ENCODE measurements at regions of chr7 and their contacts with region 1.

Region 1: DNA sequence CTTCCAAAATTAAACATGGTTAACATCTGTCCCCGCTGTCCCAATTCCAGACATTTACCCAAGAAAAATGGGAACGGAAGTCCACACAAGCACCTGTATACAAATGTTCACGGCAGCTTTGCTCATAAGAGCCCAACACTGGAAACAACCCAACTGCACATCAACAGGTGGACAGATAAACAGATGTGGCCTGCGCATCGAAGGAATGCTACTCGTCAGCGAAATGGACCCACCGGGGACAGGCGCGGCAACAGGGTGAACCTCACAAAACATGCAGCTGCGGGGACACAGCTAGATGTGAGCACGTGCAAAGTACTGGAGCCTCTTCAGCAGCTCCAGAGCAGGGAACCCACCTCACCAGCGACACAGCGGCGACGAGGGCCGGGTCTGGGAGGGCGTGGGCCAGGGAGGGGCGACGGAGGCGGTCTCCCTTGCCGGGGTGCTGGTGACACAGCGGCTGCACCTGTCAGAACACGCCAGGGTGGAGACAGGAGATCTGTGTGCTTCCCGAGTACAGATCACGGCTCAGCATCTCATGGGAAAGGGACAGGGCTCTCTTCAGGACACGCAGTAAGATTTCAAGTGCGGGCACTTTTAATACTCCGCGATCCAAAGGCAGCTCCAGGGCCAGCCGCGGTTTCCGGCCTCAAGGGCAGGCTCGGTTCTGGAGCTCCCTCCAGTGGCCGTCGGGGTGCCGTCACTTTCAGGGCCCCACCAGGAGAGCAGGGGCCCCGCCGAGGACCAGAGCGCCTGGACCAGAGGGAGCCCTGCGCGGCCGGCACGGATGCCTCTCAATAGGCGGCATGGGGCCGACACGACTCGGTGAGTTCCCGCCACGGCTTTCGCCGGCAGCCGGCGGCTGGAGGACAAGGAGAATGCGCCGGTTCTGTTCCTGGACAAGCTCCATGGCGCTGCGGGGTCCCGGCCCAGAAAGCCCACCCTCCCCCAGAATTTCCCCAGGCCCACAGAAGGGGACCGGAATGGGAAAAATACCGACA is 21.2 kb downstream of the GPR146 start:
- DNase-seq: peak; percentile 89
- ATAC-seq: peak; percentile 98
- H3K4me3 Mint-ChIP-seq: no peak overlapping the region
- H3K27ac Mint-ChIP-seq: no peak overlapping the region
- H3K4me1 Mint-ChIP-seq: peaks cover 4% of the 10 kb centered on the region
- H3K27me3 Mint-ChIP-seq: no peaks in the 10 kb centered on the region
- CTCF ChIP-seq: peak; percentile 95

Region 2: GRCh38 chr7:1044191-1045068 is 21.1 kb before region 1 on chr7 and contains the start of gene GPR146:
- CTCF ChIA-PET with region 1: interaction called, 12 read pairs
- POLR2A ChIA-PET with region 1: interaction called, 6 read pairs
- intact Hi-C with region 1: no loop called
- DNase-seq: peak; percentile 93
- ATAC-seq: peak; percentile 89
- H3K4me3 Mint-ChIP-seq: peak within 1 kb of the TSS; percentile 79
- H3K27ac Mint-ChIP-seq: peak within 1 kb of the TSS; percentile 75
- H3K4me1 Mint-ChIP-seq: peaks cover 58% of the 10 kb centered on the region
- H3K27me3 Mint-ChIP-seq: no peaks in the 10 kb centered on the region
- CTCF ChIP-seq: peak; percentile 63
- total RNA-seq, gene GPR146: 5.6 to 8.5 TPM

Region 3: DNA sequence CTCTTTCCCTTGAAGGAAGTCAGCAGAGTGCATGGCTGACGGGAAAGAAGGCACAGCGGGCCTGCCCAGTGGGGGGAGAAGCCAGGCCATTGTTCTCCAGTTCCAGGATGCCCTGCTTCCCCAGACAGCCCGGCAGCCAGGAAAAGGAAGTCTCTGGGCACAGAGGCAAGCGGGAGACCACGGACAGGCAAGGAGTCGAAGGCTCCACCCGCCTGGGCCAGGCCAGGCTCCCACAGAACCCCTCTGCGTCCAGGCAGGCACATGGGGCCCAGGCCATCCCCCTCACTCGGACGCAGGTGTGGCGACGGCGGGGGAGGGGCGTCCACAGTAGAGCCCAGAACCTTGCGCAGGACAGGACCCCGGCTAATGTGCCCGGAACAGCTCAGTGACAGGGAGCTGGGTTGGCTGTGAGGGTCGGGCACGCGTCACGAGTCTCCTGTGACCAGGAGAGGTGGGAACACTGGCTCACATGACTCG is 12.5 kb before region 1 on chr7:
- CTCF ChIA-PET with region 1: interaction called, 16 read pairs
- POLR2A ChIA-PET with region 1: interaction called, 3 read pairs
- intact Hi-C with region 1: no loop called
- DNase-seq: no peak
- ATAC-seq: no peak
- H3K4me3 Mint-ChIP-seq: no peak overlapping the region
- H3K27ac Mint-ChIP-seq: no peak overlapping the region
- H3K4me1 Mint-ChIP-seq: peaks cover 36% of the 10 kb centered on the region
- H3K27me3 Mint-ChIP-seq: no peaks in the 10 kb centered on the region
- CTCF ChIP-seq: no peak

Region 4: GRCh38 chr7:1086588-1087464 is 21.3 kb after region 1 on chr7:
- CTCF ChIA-PET with region 1: interaction called, 17 read pairs
- POLR2A ChIA-PET with region 1: no interaction called
- intact Hi-C with region 1: no loop called
- DNase-seq: peak; percentile 85
- ATAC-seq: peak; percentile 92
- H3K4me3 Mint-ChIP-seq: peak overlapping the region; percentile 58
- H3K27ac Mint-ChIP-seq: peak overlapping the region; percentile 46
- H3K4me1 Mint-ChIP-seq: peaks cover 16% of the 10 kb centered on the region
- H3K27me3 Mint-ChIP-seq: no peaks in the 10 kb centered on the region
- CTCF ChIP-seq: peak; percentile 99